Tibial artery (tissue), 4 donors: ENCODE measurements at regions of chr1 and their contacts with region 1.

Region 1: DNA sequence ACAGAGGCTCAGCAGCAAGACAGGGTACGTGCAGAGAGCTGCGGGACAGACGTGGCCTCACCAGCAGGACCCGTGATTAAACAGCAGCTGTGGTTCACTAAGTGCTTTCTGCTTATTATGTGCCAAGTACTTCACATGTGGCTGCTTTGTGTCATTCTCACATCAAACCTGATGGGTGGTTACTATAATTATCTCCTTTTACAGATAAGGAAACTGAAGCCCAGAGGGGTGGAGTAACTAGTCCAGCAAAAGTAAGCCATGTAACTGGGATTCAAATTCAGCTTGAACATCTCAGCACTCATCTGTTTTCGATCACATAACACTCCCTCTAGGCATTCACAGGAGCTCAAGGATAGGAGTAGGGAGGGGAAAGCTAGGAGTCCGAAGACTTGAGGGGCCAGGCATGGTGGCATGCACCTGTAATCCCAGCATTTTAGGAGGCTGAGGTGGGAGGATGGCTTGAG is 50.8 kb upstream of the CLIC4 start:
- DNase-seq: no peak
- H3K4me3 ChIP-seq: no peak overlapping the region
- H3K27ac ChIP-seq: no peak overlapping the region
- H3K4me1 ChIP-seq: peaks cover 0 to 13% (median 0%) of the 10 kb centered on the region in 4 donors
- H3K27me3 ChIP-seq: no peaks in the 10 kb centered on the region
- CTCF ChIP-seq: no peak

Region 2: GRCh38 chr1:24744911-24745710 is 50.7 kb after region 1 on chr1 and contains the start of gene CLIC4:
- intact Hi-C with region 1: loop called (anchors 10 kb)
- DNase-seq: peak; percentile 99 to 100
- H3K4me3 ChIP-seq: peak within 1 kb of the TSS; percentile 88 to 93
- H3K27ac ChIP-seq: peak within 1 kb of the TSS; percentile 91 to 98
- H3K4me1 ChIP-seq: peaks cover 0 to 43% (median 24%) of the 10 kb centered on the region in 4 donors
- H3K27me3 ChIP-seq: no peaks in the 10 kb centered on the region
- CTCF ChIP-seq: no peak

Region 3: DNA sequence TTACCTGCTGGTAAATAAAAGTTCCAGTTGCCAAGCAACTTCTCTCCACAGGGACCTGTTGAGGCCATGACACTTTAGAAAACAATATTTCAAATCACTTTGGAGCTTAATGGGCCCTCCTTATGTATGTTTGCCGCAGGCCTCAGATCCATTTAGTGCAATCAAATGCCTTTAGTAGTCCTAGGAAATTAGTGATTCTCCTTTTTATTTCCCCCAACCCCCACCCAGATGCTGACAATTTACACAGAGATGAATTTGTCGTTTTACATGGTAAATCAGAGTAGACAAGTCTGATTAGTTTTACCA is 134.4 kb after region 1 on chr1:
- intact Hi-C with region 1: loop called (anchors 2 kb)
- DNase-seq: no peak
- H3K4me3 ChIP-seq: no peak overlapping the region
- H3K27ac ChIP-seq: peak overlapping the region; percentile 56
- H3K4me1 ChIP-seq: peaks cover 0 to 80% (median 36%) of the 10 kb centered on the region in 4 donors
- H3K27me3 ChIP-seq: no peaks in the 10 kb centered on the region
- CTCF ChIP-seq: no peak

Region 4: GRCh38 chr1:24909388-24909898 is 215.0 kb after region 1 on chr1:
- intact Hi-C with region 1: no loop called
- DNase-seq: peak in 1 of 2 donors; percentile 62
- H3K4me3 ChIP-seq: no peak overlapping the region
- H3K27ac ChIP-seq: no peak overlapping the region
- H3K4me1 ChIP-seq: peaks cover 0 to 15% (median 2%) of the 10 kb centered on the region in 4 donors
- H3K27me3 ChIP-seq: peaks cover 0 to 13% of the 10 kb centered on the region in 2 donors
- CTCF ChIP-seq: peak in 1 of 2 experiments; percentile 26